ENCODE measurements at regions of chr4 and their contacts with region 1.

Region 1: DNA sequence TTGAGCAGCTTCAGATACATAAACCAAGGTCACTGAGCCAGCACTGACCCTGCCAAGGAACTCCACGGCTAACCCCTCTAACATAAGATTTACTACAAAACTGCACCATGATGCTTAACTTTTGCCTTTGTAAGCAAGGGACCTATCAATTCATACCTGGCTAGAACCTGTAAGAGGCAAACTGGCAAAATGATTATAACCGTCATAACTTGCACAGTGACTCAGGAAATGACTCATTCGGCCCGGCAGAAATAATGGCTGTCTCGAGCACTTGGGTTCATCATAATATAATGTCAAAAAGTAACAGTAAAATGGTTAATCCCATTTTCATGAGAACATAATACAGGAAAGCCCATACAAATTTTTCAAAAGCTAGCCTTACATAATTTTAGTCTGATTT is 17.2 kb downstream of the RASGEF1B start:
- DNase-seq: no peak
- ATAC-seq: no peak
- H3K4me3 ChIP-seq: no peak overlapping the region
- H3K4me3 Mint-ChIP-seq: peak overlapping the region; percentile 40
- H3K27ac ChIP-seq: no peak overlapping the region
- H3K27ac Mint-ChIP-seq: peak overlapping the region; percentile 47
- H3K4me1 ChIP-seq: peaks cover 7 to 21% of the 10 kb centered on the region in 2 donors
- H3K4me1 Mint-ChIP-seq: peaks cover 55% of the 10 kb centered on the region
- H3K27me3 ChIP-seq: no peaks in the 10 kb centered on the region
- H3K27me3 Mint-ChIP-seq: no peaks in the 10 kb centered on the region
- CTCF ChIP-seq: no peak

Region 2: DNA sequence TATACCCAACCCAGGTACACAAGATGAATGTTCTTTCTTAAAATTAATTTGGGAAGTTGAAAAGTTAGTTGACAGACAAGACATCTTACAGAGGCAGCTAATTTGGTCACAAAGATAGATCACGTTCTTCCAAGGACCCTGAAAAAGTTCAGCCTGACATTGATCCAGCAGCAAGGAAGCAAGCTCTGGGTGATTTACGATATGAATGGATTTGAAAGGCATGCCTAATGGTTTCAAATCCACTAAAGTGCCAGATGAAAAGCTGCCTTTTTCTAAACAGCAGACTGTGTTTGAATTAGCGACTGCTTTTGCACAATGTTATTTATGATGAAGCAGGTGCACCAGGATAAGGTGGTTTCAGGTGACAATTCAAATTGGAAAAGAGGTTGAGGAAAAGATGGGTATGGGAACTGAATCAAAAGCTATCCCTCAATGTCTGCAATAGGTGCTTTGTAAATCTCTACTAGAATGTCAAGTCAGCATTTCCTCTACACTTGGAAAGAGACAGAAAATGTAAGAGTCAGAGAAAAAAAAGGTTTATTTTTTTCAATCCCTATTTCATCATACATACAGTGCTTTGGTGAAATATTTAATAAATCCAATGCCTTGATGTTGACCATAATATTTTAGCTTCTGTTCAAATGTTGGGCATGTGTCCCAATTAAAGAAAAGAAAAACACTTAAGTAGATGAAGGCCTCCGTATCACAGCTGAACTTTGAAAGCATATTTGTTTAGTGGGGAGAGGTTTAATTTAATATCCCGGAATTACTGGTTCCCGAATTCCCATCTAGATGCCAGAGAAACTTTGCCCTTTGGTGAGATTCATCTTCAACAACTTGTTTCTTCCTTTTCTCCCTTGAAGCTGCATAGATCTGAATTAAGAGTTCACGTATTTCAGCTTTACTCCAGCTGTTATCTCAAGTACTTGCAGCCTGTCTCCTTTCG is 11.2 kb after region 1 on chr4:
- CTCF ChIA-PET with region 1: interaction called, 19 read pairs
- POLR2A ChIA-PET with region 1: no interaction called
- intact Hi-C with region 1: no loop called
- DNase-seq: peak; percentile 16
- ATAC-seq: no peak
- H3K4me3 ChIP-seq: no peak overlapping the region
- H3K4me3 Mint-ChIP-seq: no peak overlapping the region
- H3K27ac ChIP-seq: no peak overlapping the region
- H3K27ac Mint-ChIP-seq: no peak overlapping the region
- H3K4me1 ChIP-seq: peaks cover 40 to 49% of the 10 kb centered on the region in 2 donors
- H3K4me1 Mint-ChIP-seq: peaks cover 79% of the 10 kb centered on the region
- H3K27me3 ChIP-seq: no peaks in the 10 kb centered on the region
- H3K27me3 Mint-ChIP-seq: no peaks in the 10 kb centered on the region
- CTCF ChIP-seq: no peak

Measured in B cell (primary cell).